Activated naive CD4-positive, alpha-beta T cell treated with anti-CD3 and anti-CD28 coated beads for 36 hours (primary cell): ENCODE measurements at regions of chr19 and their contacts with region 1.

Region 1: GRCh38 chr19:6891761-6892385 is 4.5 kb downstream of the ADGRE1 start:
- DNase-seq: peak; percentile 22
- H3K4me3 Mint-ChIP-seq: peak overlapping the region; percentile 63
- H3K27ac Mint-ChIP-seq: peak overlapping the region; percentile 93
- H3K4me1 Mint-ChIP-seq: peaks cover 68% of the 10 kb centered on the region
- H3K27me3 Mint-ChIP-seq: no peaks in the 10 kb centered on the region

Region 2: DNA sequence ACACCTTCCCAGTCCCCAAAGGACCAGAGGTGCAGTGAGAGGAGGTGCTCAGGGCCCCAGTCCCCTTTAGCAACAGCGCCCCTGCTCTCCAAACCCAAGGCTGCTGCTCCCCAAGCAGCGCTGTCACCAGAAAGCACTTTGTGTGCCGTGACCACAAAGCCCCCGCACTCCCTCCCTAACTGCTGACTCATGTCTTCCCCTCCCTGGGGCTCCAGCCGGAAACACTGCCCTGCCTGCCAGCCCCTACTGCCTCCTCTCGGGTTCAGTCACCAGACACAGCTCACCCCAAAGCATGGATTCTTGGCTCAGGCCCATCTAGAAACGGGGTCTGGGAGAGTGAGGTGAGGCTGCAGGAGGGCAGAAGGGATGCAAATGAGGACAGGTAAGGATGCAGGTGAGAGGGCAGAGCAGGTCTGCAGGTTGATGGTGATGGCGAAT is 217.0 kb before region 1 on chr19:
- CTCF ChIA-PET with region 1: no interaction called
- intact Hi-C with region 1: loop called (anchors 5 kb)
- DNase-seq: peak; percentile 97
- H3K4me3 Mint-ChIP-seq: peak overlapping the region; percentile 34
- H3K27ac Mint-ChIP-seq: peak overlapping the region; percentile 77
- H3K4me1 Mint-ChIP-seq: peaks cover 78% of the 10 kb centered on the region
- H3K27me3 Mint-ChIP-seq: no peaks in the 10 kb centered on the region

Region 3: GRCh38 chr19:6925801-6926751 is 34.2 kb after region 1 on chr19:
- CTCF ChIA-PET with region 1: interaction called, 4 read pairs
- intact Hi-C with region 1: loop called (anchors 5 kb)
- DNase-seq: peak; percentile 51
- H3K4me3 Mint-ChIP-seq: peak overlapping the region; percentile 44
- H3K27ac Mint-ChIP-seq: peak overlapping the region; percentile 73
- H3K4me1 Mint-ChIP-seq: peaks cover 14% of the 10 kb centered on the region
- H3K27me3 Mint-ChIP-seq: no peaks in the 10 kb centered on the region

Region 4: GRCh38 chr19:6947745-6948144 is 55.9 kb after region 1 on chr19:
- CTCF ChIA-PET with region 1: no interaction called
- intact Hi-C with region 1: loop called (anchors 2 kb)
- DNase-seq: peak; percentile 82
- H3K4me3 Mint-ChIP-seq: peak overlapping the region; percentile 23
- H3K27ac Mint-ChIP-seq: peak overlapping the region; percentile 63
- H3K4me1 Mint-ChIP-seq: peaks cover 17% of the 10 kb centered on the region
- H3K27me3 Mint-ChIP-seq: no peaks in the 10 kb centered on the region

Region 5: DNA sequence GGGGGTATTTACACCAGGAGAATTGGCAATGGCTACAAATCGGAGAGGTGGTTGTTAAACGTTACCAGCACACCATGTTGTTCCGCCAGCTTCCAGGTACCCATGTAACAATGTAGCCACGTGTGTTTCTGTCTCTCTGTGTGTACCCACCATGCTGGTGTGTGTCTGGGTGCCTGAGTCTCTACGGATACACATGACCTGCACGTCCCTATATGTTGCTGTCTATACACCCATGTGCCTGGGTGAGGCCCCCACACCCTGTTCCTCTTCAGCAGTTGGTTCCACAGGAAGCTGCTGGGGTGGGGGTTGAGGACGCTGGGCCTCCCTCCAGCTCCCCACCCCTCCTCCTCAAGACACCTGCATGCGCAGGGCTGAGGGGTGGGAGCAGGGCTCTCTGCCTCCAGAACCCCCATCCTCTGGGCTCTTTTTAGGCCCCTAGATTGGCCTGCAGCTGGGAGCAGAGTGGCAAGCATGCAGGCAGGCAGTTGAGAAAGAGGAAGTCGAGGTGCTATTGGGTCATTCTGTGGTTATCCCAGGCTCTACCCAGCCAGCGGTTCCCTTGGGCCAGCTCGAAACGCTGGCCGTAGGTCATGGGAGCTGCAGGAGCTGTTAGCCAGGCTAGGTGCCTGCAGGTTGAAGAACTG is 456.8 kb after region 1 on chr19 and contains the start of gene ARHGEF18:
- CTCF ChIA-PET with region 1: no interaction called
- intact Hi-C with region 1: loop called (anchors 2 kb)
- DNase-seq: peak; percentile 75
- H3K4me3 Mint-ChIP-seq: peak within 1 kb of the TSS; percentile 82
- H3K27ac Mint-ChIP-seq: peak within 1 kb of the TSS; percentile 96
- H3K4me1 Mint-ChIP-seq: peaks cover 59% of the 10 kb centered on the region
- H3K27me3 Mint-ChIP-seq: no peaks in the 10 kb centered on the region
- total RNA-seq, gene ARHGEF18: 24.6 to 28.7 TPM